ENCODE measurements at regions of chr19 and their contacts with region 1.

Region 1: GRCh38 chr19:58182989-58183816 is at the start of gene ZNF274:
- DNase-seq: peak; percentile 93 to 98
- H3K4me3 ChIP-seq: peak within 1 kb of the TSS; percentile 79 to 89 (median 86)
- H3K27ac ChIP-seq: peak within 1 kb of the TSS; percentile 97 to 99 (median 98)
- H3K4me1 ChIP-seq: peaks cover 0 to 21% (median 8%) of the 10 kb centered on the region in 4 donors
- H3K27me3 ChIP-seq: no peaks in the 10 kb centered on the region
- CTCF ChIP-seq: no peak
- EP300 ChIP-seq: no peak
- POLR2A ChIP-seq: no peak
- total RNA-seq, gene ZNF274: 6.2 to 46.9 (median 28.6) TPM

Region 2: GRCh38 chr19:58128041-58128685 is 55.0 kb before region 1 on chr19:
- intact Hi-C with region 1: no loop called
- DNase-seq: no peak
- H3K4me3 ChIP-seq: no peak overlapping the region
- H3K27ac ChIP-seq: no peak overlapping the region
- H3K4me1 ChIP-seq: no peaks in the 10 kb centered on the region
- H3K27me3 ChIP-seq: no peaks in the 10 kb centered on the region
- CTCF ChIP-seq: no peak
- EP300 ChIP-seq: no peak
- POLR2A ChIP-seq: no peak

Region 3: GRCh38 chr19:58261968-58262921 is 79.0 kb after region 1 on chr19:
- intact Hi-C with region 1: loop called (anchors 10 kb)
- DNase-seq: no peak
- H3K4me3 ChIP-seq: no peak overlapping the region
- H3K27ac ChIP-seq: no peak overlapping the region
- H3K4me1 ChIP-seq: no peaks in the 10 kb centered on the region
- H3K27me3 ChIP-seq: no peaks in the 10 kb centered on the region
- CTCF ChIP-seq: no peak
- EP300 ChIP-seq: no peak
- POLR2A ChIP-seq: no peak